Lower leg skin (tissue), 4 donors: ENCODE measurements at regions of chr5 and their contacts with region 1.

Region 1: DNA sequence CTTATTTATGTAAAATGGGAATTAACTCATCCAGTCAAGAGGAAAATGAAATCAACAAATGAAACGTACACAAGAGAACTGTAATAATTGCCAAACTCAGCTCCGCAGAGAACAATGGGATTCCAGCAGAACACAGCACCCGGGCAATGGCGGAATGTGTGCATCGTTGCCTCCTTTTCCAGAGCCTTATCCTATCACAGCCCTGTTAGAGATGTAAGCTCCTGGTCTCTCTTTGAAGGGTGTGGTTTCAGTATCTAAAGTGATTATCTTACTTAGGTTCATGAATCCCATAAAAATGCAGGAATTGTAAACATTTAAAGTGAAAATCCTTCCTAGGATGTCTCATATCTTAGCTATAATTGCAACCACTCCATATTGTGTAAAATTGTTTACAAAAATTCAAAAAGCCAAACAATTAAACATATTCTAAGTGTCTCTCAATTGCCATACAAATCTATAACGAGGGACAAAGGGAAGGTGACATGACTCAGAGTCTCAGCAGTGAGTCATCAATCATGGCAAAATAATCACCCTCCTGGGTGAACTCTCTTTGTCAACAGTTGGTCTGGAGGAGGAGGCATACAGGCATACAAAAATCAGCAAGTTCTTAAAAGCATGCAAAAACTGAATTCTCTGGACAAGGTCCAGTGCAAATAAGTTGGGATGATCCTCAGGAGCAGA is 22.6 kb downstream of the SEMA5A start:
- DNase-seq: no peak
- H3K4me3 ChIP-seq: no peak overlapping the region
- CTCF ChIP-seq: no peak
- POLR2A ChIP-seq: no peak

Region 2: DNA sequence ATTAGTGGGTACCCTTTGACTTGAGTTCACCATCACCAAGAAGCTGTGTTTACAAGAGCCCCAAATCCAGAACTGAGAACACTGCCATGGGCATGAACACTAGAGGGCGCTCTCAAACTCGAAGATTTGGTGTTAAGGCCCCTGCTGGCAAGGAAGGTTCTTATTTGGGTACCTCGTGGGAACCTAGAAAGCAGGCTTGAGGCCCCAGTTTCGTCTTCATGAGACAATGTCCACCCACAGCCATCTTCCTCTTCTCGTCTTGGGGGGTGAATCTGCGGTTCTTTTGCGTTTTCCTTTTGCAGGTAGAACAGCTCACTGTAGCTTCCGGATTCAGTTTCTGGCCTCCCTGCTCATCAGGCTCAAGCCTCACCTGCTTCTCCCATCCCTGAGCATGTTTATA is 161.4 kb before region 1 on chr5:
- intact Hi-C with region 1: loop called (anchors 10 kb)
- DNase-seq: no peak
- H3K4me3 ChIP-seq: no peak overlapping the region
- CTCF ChIP-seq: no peak
- POLR2A ChIP-seq: no peak

Region 3: GRCh38 chr5:9632495-9632894 is 109.3 kb after region 1 on chr5:
- intact Hi-C with region 1: no loop called
- DNase-seq: no peak
- H3K4me3 ChIP-seq: no peak overlapping the region
- CTCF ChIP-seq: no peak
- POLR2A ChIP-seq: no peak